IMR-90 (cell line): ENCODE measurements at regions of chr9 and their contacts with region 1.

Region 1: DNA sequence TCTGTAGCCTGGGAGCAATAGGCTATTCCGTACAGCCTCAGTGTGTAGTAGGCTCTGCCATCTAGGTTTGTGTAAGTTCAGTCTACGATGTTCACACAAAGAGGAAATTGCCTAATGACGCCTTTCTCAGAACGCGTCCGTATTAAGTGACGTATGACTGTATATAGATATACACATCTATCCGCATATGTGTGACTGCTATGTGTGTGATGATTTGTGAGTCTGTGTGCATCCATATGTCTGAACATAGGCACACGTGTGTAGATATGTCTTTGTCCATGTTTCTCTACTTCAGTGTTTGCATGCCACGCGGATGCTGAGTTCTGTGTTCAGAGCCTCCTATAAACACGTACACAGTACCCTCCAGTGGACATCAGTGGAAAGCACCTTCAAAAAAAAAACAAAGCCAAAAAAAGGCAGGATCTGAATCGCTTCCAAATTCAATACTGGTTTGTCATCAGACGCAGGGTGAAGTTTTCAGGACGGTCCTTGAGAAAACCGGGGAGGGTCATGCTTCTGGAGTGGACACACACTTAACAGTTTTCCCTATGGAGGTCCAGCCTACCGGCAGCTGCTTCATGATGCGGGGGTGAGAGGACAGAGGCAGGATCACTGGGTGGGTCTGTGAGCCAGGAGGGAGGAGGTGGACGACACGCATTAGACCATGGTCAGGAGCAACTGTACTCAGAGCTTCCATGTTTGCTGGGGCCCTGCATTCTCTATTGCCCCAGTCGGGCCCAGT is 29.5 kb upstream of the ALDH1B1 start:
- DNase-seq: peak; percentile 85
- ATAC-seq: peak; percentile 84
- H3K4me3 ChIP-seq: no peak overlapping the region
- H3K27ac ChIP-seq: no peak overlapping the region
- H3K4me1 ChIP-seq: peaks cover 3% of the 10 kb centered on the region
- H3K27me3 ChIP-seq: peaks cover 7% of the 10 kb centered on the region
- CTCF ChIP-seq: peak; percentile 80
- POLR2A ChIP-seq: 0 out of 2 replicates have a peak, but pooled peaks have one; percentile 28
- RAD21 ChIP-seq: peak; percentile 80

Region 2: DNA sequence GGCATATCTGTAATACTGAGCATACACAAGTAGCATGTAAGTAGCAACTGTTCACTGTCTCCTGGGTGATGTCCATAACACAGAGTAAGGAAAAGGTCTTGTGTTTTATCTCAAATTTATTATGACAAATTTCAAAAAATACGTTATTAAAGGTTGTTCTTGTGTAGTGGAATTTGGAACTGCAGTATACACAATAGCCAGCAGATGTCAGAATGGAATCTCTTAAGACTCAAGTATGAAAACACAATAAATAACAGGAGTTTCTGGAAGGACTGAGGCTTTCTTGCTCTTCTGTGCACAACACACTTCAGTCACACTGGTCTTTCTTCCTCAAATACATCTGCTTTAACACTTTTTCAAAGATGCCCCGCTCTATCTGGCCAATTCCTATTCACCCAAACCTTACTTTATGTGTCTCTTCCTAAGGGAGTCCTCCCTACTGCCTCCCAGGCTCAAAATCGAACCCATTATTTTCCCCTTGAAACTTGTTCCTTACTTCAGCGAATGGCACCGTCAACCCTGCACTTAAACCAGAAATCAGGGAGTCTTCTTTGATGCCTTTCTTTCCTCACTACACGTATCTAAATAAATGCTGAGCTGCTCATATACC is 780.4 kb before region 1 on chr9:
- CTCF ChIA-PET with region 1: no interaction called
- POLR2A ChIA-PET with region 1: no interaction called
- dilution Hi-C with region 1: no loop called
- in situ Hi-C with region 1: loop called (anchors 10 kb)
- intact Hi-C with region 1: no loop called
- DNase-seq: peak; percentile 86
- ATAC-seq: peak; percentile 93
- H3K4me3 ChIP-seq: no peak overlapping the region
- H3K27ac ChIP-seq: no peak overlapping the region
- H3K4me1 ChIP-seq: no peaks in the 10 kb centered on the region
- H3K27me3 ChIP-seq: no peaks in the 10 kb centered on the region
- CTCF ChIP-seq: peak; percentile 75
- POLR2A ChIP-seq: no peak
- RAD21 ChIP-seq: peak; percentile 70

Region 3: DNA sequence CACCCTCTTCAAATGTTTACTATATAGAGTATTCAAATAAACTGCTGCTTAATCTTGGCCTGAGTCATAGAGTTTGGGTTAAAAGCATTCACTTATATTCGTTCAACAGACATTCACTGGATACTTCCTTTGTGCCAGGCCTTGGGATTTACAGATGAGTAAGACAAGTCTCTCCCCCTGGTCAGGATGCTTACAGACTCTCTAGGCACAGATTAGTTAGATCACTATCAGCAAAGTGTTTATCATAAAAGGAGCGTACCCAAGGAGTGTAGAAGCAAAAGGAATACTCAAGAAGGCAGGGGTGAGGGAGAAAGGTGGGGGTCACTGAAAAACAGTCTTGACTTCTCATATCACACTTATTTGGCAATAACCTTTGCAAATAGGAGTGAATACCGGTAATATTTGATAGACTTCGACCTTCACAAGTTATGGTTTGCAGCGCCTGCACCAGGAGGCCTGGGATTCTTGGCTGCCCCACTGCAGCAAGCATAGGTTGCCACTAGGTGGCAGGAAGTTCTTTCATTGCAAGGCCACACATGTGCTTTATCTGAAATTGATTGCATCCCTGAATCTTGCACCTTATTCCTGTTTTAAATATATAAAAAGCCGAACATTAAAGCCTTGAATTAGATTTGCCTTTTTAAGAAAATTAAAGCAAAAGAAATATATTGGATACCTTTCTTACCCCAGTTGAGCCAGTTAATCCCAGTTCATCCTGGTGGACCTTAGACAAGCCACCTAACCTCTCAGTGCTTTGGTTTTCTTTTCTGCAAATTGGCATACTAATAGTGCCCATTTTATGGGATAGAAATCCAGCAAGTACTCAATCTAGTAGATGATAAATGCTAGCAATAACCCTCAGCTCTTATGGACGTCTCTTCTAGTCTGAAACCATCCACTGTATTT is 615.9 kb before region 1 on chr9:
- CTCF ChIA-PET with region 1: interaction called, 3 read pairs
- POLR2A ChIA-PET with region 1: no interaction called
- dilution Hi-C with region 1: no loop called
- in situ Hi-C with region 1: no loop called
- intact Hi-C with region 1: loop called (anchors 2 kb)
- DNase-seq: peak; percentile 86
- ATAC-seq: peak; percentile 93
- H3K4me3 ChIP-seq: no peak overlapping the region
- H3K27ac ChIP-seq: no peak overlapping the region
- H3K4me1 ChIP-seq: peaks cover 8% of the 10 kb centered on the region
- H3K27me3 ChIP-seq: peaks cover 21% of the 10 kb centered on the region
- CTCF ChIP-seq: peak; percentile 79
- POLR2A ChIP-seq: no peak
- RAD21 ChIP-seq: peak; percentile 81

Region 4: DNA sequence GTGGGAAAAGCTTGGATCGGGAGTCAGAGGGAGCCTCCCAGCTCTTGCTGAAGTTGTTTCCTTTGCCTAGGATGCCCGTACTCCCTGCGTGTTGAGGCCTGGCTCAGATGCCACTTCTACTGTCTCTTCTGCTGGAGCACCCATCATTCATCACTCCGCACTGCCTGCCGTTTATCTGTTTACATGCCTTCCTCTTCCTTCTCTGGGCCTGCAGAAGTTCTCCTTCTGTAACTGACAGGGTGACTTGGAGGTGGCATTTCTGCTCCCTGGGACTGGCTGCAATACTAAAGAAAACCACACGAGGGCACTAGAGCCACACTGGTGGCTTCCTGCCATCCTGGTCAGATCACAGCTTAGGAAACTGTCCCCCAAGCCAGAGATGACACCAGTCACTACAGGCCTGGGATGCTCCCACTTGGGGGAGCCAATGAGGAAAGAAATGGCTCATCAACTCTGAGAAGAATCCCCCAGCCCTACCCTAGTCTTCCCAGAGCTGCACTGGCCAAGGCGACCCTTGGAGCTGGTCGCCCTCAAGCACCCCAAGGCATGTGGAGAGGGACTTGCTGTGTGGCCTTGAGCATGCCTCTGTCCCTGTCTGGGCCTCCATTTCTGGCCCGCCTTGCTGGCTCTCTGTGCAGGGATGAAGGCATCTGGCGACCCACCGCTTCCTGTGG is 449.4 kb before region 1 on chr9:
- CTCF ChIA-PET with region 1: no interaction called
- POLR2A ChIA-PET with region 1: no interaction called
- dilution Hi-C with region 1: no loop called
- in situ Hi-C with region 1: loop called (anchors 5 kb)
- intact Hi-C with region 1: loop called (anchors 1 kb)
- DNase-seq: peak; percentile 72
- ATAC-seq: peak; percentile 90
- H3K4me3 ChIP-seq: no peak overlapping the region
- H3K27ac ChIP-seq: no peak overlapping the region
- H3K4me1 ChIP-seq: peaks cover 17% of the 10 kb centered on the region
- H3K27me3 ChIP-seq: no peaks in the 10 kb centered on the region
- CTCF ChIP-seq: peak; percentile 98
- POLR2A ChIP-seq: peak; percentile 60
- RAD21 ChIP-seq: peak; percentile 100

Region 5: DNA sequence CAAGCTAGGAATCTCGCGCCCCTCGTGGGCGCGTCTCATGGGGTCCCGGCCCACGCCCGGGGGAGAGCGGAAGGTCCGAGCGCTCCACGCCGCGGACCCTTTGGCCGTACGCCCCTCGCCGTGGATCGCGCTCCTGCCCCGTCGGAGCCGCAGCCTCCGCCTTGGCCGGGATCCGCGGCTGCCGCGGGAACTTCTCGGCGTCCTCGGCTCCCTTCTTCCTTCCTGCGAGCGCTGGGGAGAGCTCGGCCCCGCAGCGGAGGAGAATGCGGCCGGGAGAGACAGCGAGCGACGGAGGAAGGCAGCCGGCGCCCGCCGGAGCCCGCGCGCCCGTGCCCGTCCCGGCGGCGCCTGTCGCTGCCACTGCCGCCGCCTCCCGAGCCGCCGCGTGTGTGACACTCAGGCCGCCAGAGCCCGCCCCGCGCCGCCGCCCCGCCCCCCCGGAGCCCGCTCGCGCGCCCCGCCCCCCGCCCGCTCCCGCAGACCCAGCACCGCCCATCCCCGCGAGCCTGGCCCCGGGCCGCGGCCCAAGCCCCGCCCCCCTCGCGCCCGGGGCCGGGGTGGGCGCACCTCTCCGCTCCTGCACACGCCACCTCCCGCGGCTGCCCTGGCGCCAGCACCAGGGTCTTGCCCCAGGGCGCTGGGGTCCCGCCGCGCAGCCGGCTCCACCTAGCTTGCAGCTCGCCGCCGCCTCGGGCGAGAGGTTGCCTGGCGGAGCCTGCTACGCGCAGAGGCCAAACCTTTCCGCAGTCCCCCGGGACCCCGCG is 294.0 kb before region 1 on chr9 and contains the start of gene SHB:
- CTCF ChIA-PET with region 1: no interaction called
- POLR2A ChIA-PET with region 1: no interaction called
- dilution Hi-C with region 1: no loop called
- in situ Hi-C with region 1: no loop called
- intact Hi-C with region 1: loop called (anchors 5 kb)
- DNase-seq: peak; percentile 33
- ATAC-seq: peak; percentile 71
- H3K4me3 ChIP-seq: peak within 1 kb of the TSS; percentile 89
- H3K27ac ChIP-seq: peak within 1 kb of the TSS; percentile 95
- H3K4me1 ChIP-seq: peaks cover 19% of the 10 kb centered on the region
- H3K27me3 ChIP-seq: no peaks in the 10 kb centered on the region
- CTCF ChIP-seq: no peak
- POLR2A ChIP-seq: peak; percentile 96
- RAD21 ChIP-seq: no peak
- total RNA-seq, gene SHB: 6.1 and 7.8 TPM in 2 replicates

Region 6: GRCh38 chr9:38401994-38402393 is 39.0 kb after region 1 on chr9:
- CTCF ChIA-PET with region 1: no interaction called
- POLR2A ChIA-PET with region 1: no interaction called
- dilution Hi-C with region 1: no loop called
- in situ Hi-C with region 1: no loop called
- intact Hi-C with region 1: no loop called
- DNase-seq: no peak
- ATAC-seq: no peak
- H3K4me3 ChIP-seq: no peak overlapping the region
- H3K27ac ChIP-seq: no peak overlapping the region
- H3K4me1 ChIP-seq: peaks cover 2% of the 10 kb centered on the region; the same call in 1 of the 2 replicates
- H3K27me3 ChIP-seq: peaks cover 41% of the 10 kb centered on the region
- CTCF ChIP-seq: no peak
- POLR2A ChIP-seq: no peak
- RAD21 ChIP-seq: no peak